ENCODE measurements at regions of chr18 and their contacts with region 1.

Region 1: GRCh38 chr18:34643989-34644388 is 66.1 kb upstream of the DTNA start:
- DNase-seq: no peak

Region 2: GRCh38 chr18:33849731-33850130 is 794.3 kb before region 1 on chr18:
- intact Hi-C with region 1: loop called in 1 of 2 experiments (anchors 5 kb)
- DNase-seq: no peak

Region 3: GRCh38 chr18:34509879-34510586 is 134.0 kb before region 1 on chr18:
- intact Hi-C with region 1: no loop called
- DNase-seq: no peak

Region 4: GRCh38 chr18:34867520-34867919 is 223.5 kb after region 1 on chr18:
- intact Hi-C with region 1: no loop called
- DNase-seq: no peak